Activated T-helper 2 cell treated with anti-CD3 and anti-CD28 coated beads, Interferon-gamma antibody, Interleukin-2, Interleukin-4, amounts not matched to agents 10 μg/mL and 5 μg/mL and 100 μg/mL, durations not matched to agents 14 hours and 24 hours and 36 hours (primary cell): ENCODE measurements at regions of chr2 and their contacts with region 1.

Region 1: GRCh38 chr2:71798266-71799012 is 345.1 kb downstream of the DYSF start:
- DNase-seq: no peak
- H3K4me3 Mint-ChIP-seq: no peak overlapping the region
- H3K27ac Mint-ChIP-seq: no peak overlapping the region
- H3K4me1 Mint-ChIP-seq: no peaks in the 10 kb centered on the region
- H3K27me3 Mint-ChIP-seq: no peaks in the 10 kb centered on the region

Region 2: DNA sequence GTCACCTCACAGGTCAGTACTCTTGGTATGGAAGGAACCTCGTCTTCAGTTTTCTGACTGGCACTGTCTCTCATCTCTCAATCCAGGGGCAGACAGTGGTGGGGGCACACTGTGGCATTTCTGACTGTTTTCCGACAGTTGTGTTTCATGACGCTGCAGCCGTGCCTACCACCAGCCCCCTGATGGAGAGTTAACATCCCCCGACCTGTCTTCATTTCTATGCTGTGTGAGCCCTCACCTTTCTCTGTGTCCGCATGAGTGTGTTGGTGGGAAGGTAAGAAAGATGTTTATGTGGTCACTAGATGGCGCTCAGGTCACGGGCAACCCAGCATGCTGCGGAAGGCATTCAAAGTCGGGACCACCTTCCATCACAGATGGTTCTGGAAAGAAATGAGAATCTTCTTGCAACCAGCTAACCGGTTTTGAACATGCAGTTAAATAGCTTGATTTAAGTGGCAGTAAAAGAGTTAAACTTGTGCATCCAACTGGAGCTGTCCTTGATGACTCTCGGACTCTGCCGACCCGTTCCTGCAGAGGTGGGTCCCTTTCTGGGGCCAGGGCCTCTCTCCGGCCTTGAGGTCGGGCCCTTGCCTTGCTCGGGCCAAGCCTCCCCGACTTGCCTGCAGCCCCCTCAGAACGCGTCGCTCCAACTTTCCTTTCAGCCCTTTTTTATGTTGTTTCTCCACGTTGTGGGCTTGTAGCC is 252.7 kb before region 1 on chr2:
- intact Hi-C with region 1: loop called (anchors 5 kb)
- DNase-seq: peak; percentile 18
- H3K4me3 Mint-ChIP-seq: peak overlapping the region; percentile 13
- H3K27ac Mint-ChIP-seq: no peak overlapping the region
- H3K4me1 Mint-ChIP-seq: peaks cover 2% of the 10 kb centered on the region
- H3K27me3 Mint-ChIP-seq: peaks cover 7% of the 10 kb centered on the region

Region 3: GRCh38 chr2:71700658-71701397 is 97.6 kb before region 1 on chr2:
- intact Hi-C with region 1: no loop called
- DNase-seq: no peak
- H3K4me3 Mint-ChIP-seq: no peak overlapping the region
- H3K27ac Mint-ChIP-seq: no peak overlapping the region
- H3K4me1 Mint-ChIP-seq: no peaks in the 10 kb centered on the region
- H3K27me3 Mint-ChIP-seq: no peaks in the 10 kb centered on the region